ENCODE measurements at regions of chr11 and their contacts with region 1.

Region 1: DNA sequence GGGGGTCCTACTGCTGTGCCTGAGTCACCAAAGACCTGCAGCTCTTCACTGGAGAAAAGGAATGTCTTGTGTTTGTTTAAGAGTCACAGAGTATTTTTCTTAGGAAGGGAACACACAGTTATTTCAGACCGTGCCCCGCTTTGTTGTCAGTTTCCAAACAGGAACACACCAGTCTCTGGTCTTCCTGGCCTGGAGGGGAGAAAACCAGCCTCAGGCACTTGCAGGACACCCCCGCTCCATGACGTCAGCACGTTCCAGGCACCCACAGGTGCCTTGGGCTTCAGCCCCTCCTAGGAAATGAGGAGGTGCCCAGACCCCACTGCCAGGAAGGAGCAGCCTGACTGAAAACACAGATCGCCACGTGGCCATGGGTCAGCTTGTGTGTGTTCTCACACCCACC is 5.4 kb downstream of the DEAF1 start:
- DNase-seq: no peak
- ATAC-seq: no peak
- H3K4me3 ChIP-seq: no peak overlapping the region
- H3K27ac ChIP-seq: no peak overlapping the region
- H3K4me1 ChIP-seq: peaks cover 30% of the 10 kb centered on the region
- H3K27me3 ChIP-seq: no peaks in the 10 kb centered on the region
- CTCF ChIP-seq: no peak

Region 2: GRCh38 chr11:326842-327580 is 362.6 kb before region 1 on chr11:
- CTCF ChIA-PET with region 1: no interaction called
- POLR2A ChIA-PET with region 1: no interaction called
- in situ Hi-C with region 1: no loop called
- intact Hi-C with region 1: no loop called
- DNase-seq: no peak
- ATAC-seq: peak; percentile 49
- H3K4me3 ChIP-seq: no peak overlapping the region
- H3K27ac ChIP-seq: peak overlapping the region; percentile 62
- H3K4me1 ChIP-seq: peaks cover 32% of the 10 kb centered on the region
- H3K27me3 ChIP-seq: no peaks in the 10 kb centered on the region
- CTCF ChIP-seq: no peak

Region 3: DNA sequence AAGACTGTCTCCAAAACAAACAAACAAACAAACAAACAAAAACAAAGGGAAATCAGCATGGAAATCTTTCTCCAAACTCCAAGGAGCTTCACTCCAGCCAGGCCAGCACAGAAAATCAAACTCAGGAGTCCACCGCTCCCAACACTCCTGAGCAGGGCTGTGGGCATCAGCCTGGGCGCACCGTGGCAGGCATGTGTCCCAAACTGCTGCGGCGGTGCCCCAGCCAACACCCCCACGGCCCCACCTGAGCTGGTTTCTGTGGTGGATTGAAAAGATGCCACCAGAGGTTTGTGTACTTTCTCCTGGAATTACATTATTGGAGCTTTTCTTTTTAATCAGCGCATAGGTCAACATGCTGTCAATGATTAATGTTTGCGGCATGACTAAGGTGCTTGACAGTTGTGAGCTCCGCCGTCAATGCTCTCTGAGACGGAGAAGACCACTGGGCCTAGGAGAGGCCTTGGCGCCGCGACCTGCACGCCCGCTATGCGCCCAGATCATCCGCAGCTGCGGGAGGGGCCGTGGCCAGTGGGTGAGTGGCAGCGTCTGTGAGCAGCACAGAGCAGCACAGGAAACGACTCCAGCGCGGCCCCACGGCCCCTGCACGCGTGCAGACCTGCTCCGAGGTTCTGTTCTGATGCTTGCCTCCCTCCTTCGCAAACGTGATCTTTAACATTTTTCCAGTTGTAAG is 34.4 kb before region 1 on chr11:
- CTCF ChIA-PET with region 1: interaction called, 11 read pairs
- POLR2A ChIA-PET with region 1: no interaction called
- in situ Hi-C with region 1: no loop called
- intact Hi-C with region 1: no loop called
- DNase-seq: no peak
- ATAC-seq: no peak; the same call in 1 of the 2 replicates
- H3K4me3 ChIP-seq: no peak overlapping the region
- H3K27ac ChIP-seq: no peak overlapping the region
- H3K4me1 ChIP-seq: no peaks in the 10 kb centered on the region
- H3K27me3 ChIP-seq: no peaks in the 10 kb centered on the region
- CTCF ChIP-seq: no peak

Measured in Panc1 (cell line).